Testis (tissue), 5 donors: ENCODE measurements at regions of chr9 and their contacts with region 1.

Region 1: DNA sequence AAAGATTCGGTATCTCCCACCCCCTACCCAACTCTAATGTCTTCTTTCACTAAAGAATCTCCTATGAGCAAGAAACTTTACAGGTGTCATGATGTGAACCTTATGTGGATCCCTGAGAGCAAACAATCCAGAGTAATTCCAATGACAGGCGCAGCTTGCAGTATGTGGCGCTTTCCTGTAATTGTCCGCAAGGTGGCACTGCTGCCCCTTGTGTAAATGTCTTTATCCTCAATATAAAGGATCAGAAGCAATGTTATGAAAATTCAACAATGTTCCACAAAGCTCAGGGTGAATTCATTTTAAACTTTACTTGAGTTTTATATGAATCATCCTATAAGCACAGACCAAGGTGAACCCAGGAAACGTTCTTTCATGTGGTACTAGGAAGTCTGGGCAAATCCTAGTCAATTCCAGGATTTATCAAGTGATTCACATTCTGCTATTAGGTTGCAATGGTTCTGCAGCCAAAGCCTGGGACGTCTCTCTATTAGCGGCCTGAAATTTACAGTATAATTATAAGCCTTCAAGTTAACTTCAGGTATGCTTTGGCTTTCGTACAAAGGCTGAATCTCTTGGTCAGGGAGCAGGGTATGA is 113.7 kb downstream of the TRPM6 start:
- DNase-seq: peak; percentile 88
- H3K4me3 ChIP-seq: no peak overlapping the region
- H3K27ac ChIP-seq: no peak overlapping the region
- H3K4me1 ChIP-seq: no peaks in the 10 kb centered on the region
- H3K27me3 ChIP-seq: no peaks in the 10 kb centered on the region
- CTCF ChIP-seq: peak in 2 of 3 experiments; percentile 82 to 85
- POLR2A ChIP-seq: no peak

Region 2: DNA sequence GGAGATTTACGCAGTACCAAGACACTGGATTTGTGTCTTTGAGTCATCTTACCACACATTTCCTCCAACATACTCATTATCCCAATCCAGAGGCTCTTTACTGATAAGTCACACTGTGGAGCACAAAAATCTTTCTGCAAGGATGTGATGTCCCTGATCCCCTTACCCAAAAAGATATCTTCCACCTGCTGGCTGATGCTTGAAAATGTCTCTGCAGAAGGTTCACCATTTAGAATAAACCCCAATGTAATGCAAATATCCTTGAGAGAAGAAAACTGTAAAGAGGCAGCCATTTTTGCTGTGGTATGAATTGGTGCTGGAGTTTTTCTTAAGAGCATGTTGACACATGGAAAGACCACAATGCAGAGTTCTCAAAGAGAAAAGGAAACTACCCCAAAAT is 342.5 kb before region 1 on chr9:
- intact Hi-C with region 1: no loop called
- DNase-seq: no peak
- H3K4me3 ChIP-seq: no peak overlapping the region
- H3K27ac ChIP-seq: no peak overlapping the region
- H3K4me1 ChIP-seq: no peaks in the 10 kb centered on the region
- H3K27me3 ChIP-seq: no peaks in the 10 kb centered on the region
- CTCF ChIP-seq: no peak
- POLR2A ChIP-seq: no peak

Region 3: DNA sequence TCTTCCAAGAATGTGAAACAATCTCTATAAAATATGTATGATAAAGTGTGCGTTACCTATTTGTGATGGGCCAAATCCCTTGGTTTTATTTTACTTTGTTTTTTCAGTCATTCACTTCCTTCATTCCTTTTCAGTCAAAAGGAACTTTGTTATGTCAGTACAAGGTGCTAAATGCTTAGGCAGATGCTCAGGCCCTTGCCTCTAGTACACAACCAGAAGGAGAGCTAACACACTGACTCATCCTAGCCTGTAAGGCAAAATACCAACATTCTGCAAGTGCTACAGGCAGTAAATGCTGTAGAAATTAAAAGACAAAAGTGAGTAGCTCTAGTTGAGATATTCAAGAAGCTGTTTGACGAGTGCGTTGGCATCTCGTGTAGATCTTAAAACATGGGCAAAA is 64.4 kb after region 1 on chr9:
- intact Hi-C with region 1: no loop called
- DNase-seq: no peak
- H3K4me3 ChIP-seq: no peak overlapping the region
- H3K27ac ChIP-seq: no peak overlapping the region
- H3K4me1 ChIP-seq: peaks cover 4% of the 10 kb centered on the region
- H3K27me3 ChIP-seq: no peaks in the 10 kb centered on the region
- CTCF ChIP-seq: no peak
- POLR2A ChIP-seq: no peak

Region 4: GRCh38 chr9:75001719-75002422 is 227.9 kb after region 1 on chr9:
- intact Hi-C with region 1: loop called (anchors 10 kb)
- DNase-seq: no peak
- H3K4me3 ChIP-seq: no peak overlapping the region
- H3K27ac ChIP-seq: no peak overlapping the region
- H3K4me1 ChIP-seq: no peaks in the 10 kb centered on the region
- H3K27me3 ChIP-seq: no peaks in the 10 kb centered on the region
- CTCF ChIP-seq: peak; percentile 63 to 82 (median 73)
- POLR2A ChIP-seq: no peak

Region 5: GRCh38 chr9:75071530-75072124 is 297.6 kb after region 1 on chr9:
- intact Hi-C with region 1: loop called (anchors 10 kb)
- DNase-seq: no peak
- H3K4me3 ChIP-seq: no peak overlapping the region
- H3K27ac ChIP-seq: no peak overlapping the region
- H3K4me1 ChIP-seq: no peaks in the 10 kb centered on the region
- H3K27me3 ChIP-seq: no peaks in the 10 kb centered on the region
- CTCF ChIP-seq: no peak
- POLR2A ChIP-seq: no peak

Region 6: DNA sequence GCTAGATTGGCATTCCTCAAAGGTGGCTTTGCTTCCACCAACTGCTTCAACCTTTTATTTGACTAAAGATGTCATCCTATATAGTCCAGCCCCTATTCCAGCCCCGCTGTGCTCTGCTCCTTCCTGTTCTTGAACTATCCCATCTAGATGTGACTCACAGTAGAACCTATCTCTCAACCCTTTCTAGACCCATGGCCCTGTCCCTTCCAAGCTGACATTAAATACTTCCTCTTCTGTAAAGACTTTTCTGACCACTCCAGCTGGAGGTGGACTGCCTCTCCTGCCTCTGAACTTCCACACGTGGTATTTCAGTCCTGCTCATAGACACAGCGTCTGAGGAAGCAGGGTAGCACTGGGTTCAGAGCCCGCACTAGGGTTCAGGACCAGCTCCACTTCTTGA is 346.7 kb after region 1 on chr9:
- intact Hi-C with region 1: no loop called
- DNase-seq: no peak
- H3K4me3 ChIP-seq: no peak overlapping the region
- H3K27ac ChIP-seq: no peak overlapping the region
- H3K4me1 ChIP-seq: no peaks in the 10 kb centered on the region
- H3K27me3 ChIP-seq: no peaks in the 10 kb centered on the region
- CTCF ChIP-seq: no peak
- POLR2A ChIP-seq: no peak